A673 (cell line): ENCODE measurements at regions of chr3 and their contacts with region 1.

Region 1: DNA sequence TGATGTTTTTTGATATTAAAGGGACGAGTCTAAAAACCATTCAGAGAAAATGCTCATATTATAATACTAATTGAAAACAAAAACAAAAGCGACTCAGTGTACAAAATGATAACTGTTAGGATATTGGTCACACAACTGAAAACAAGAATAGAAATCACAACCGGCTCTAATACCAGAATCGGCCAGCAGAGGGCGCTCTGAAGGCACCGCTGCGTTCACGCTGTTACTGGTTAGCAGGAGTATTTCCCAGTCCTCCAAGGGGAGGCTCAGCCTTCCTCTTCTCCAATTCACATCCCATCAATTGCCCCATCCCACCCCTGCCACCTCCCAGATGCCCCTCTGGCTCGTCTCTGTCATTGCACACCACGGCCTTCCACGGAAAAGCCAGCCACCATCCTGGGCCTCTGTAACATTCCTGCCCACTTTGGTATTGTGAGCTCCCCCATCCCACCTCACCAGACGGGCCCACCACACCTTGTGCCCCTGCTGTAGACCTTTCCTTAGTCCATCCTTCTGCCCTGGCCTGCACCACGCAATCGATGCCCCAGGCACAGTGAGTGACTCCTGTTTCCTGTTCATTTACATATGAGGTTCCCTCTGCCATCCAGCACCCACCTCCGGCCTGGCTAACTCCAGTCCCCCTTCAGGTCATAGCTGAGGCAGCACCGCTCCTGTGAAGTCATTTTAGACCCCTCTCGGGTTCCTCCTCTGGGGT is 8.5 kb downstream of the FAM107A start:
- DNase-seq: peak; percentile 60
- H3K4me3 ChIP-seq: no peak overlapping the region
- H3K27ac ChIP-seq: no peak overlapping the region
- H3K4me1 ChIP-seq: no peaks in the 10 kb centered on the region
- H3K27me3 ChIP-seq: no peaks in the 10 kb centered on the region
- CTCF ChIP-seq: peak; percentile 75

Region 2: GRCh38 chr3:58473275-58473674 is 95.5 kb before region 1 on chr3:
- CTCF ChIA-PET with region 1: interaction called, 16 read pairs
- POLR2A ChIA-PET with region 1: no interaction called
- intact Hi-C with region 1: no loop called
- DNase-seq: no peak
- H3K4me3 ChIP-seq: no peak overlapping the region
- H3K27ac ChIP-seq: peak overlapping the region; percentile 30
- H3K4me1 ChIP-seq: peaks cover 31% of the 10 kb centered on the region
- H3K27me3 ChIP-seq: no peaks in the 10 kb centered on the region
- CTCF ChIP-seq: no peak

Region 3: DNA sequence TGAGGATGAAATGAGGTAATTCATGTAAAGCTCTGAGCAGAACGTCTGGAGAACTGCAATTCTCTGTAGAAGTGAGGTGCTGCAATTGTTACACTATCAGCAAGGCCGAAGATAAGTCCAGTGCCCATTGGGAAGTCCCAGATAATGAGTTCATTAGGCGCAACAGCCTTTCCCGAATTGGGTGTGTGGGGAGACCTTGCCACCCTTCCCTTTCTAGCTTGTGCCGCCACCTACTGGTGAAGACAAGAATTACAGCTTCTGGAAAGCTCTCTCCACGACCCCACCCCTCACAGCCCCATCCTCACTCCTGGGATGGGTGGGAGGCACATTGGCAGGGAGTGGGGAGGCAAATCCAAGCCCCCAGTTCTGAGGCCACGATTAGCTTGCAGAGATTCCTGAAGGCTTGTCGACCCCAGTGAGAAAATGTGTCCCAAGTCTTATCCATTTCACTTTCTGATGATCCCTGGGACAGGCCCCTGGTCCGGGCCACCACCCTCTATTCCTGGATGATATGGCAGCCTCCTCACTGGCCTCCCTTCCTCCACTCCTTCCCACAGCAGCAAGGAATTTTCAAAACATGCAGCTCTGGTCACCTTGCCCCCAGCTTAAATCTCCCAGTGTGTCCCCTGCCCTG is 61.5 kb after region 1 on chr3:
- CTCF ChIA-PET with region 1: interaction called, 19 read pairs
- POLR2A ChIA-PET with region 1: no interaction called
- intact Hi-C with region 1: loop called (anchors 1 kb)
- DNase-seq: peak; percentile 62
- H3K4me3 ChIP-seq: no peak overlapping the region
- H3K27ac ChIP-seq: no peak overlapping the region
- H3K4me1 ChIP-seq: peaks cover 16% of the 10 kb centered on the region
- H3K27me3 ChIP-seq: no peaks in the 10 kb centered on the region
- CTCF ChIP-seq: peak; percentile 70